Left cardiac atrium (tissue), 4 donors: ENCODE measurements at regions of chr4 and their contacts with region 1.

Region 1: GRCh38 chr4:90234916-90235547 is 107.8 kb downstream of the CCSER1 start:
- DNase-seq: peak; percentile 51
- ATAC-seq: peak; percentile 90 to 94

Region 2: DNA sequence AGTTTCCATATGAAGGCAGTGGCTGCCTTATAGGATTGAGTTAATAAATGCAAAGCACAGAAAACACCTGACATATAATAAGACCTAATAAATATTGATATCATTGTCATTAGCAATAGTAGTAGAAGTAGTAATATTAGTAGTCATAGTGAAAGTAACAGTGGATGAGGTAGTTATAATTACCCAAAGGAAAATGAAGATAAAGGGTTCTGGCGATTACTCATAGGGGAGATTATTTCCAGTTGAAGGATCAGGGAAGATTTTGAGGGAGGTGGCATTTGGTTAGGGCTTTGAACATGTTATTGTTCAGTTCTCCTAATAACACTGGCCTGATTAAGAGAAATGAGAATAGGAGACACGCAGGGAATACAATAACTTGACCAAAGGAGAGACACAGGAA is 795.5 kb before region 1 on chr4:
- intact Hi-C with region 1: no loop called
- DNase-seq: no peak
- ATAC-seq: no peak

Region 3: DNA sequence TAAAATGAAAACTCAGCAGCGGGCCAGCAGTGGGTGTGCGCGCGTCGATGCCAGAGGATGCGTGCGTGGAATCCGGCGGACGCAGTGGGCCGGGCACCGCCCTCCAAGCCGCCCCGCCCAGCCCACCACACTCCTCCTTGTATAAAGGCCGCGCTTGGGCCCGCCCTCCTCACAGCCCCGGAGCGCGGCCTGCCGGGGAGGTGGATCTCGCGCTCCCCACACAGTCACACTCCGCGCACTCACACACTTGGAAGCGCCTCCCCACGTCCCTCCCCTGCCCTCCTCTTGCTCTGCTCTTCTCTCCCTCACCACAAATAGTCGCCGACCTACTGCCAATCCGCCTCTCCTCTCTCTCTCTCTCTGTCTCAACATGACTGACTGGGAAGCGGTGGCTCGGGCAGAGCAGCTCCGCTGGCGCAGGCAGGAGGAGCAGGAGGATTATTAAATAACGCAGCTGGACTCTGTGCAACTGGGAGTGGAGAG is 107.8 kb before region 1 on chr4 and contains the start of gene CCSER1:
- intact Hi-C with region 1: loop called in 1 of 2 experiments (anchors 5 kb)
- DNase-seq: peak; percentile 87
- ATAC-seq: peak; percentile 96 to 98
- total RNA-seq, gene CCSER1: 9.6 to 12.3 TPM

Region 4: GRCh38 chr4:90718931-90719330 is 483.9 kb after region 1 on chr4:
- intact Hi-C with region 1: no loop called
- DNase-seq: no peak
- ATAC-seq: no peak